Transverse colon (tissue), 4 donors: ENCODE measurements at regions of chr6 and their contacts with region 1.

Region 1: GRCh38 chr6:41633056-41633634 is 5.1 kb upstream of the MDFI start:
- DNase-seq: no peak
- H3K4me3 ChIP-seq: no peak overlapping the region
- H3K27ac ChIP-seq: no peak overlapping the region
- H3K4me1 ChIP-seq: peaks cover 0 to 17% (median 12%) of the 10 kb centered on the region in 4 donors
- H3K27me3 ChIP-seq: peaks cover 33% of the 10 kb centered on the region
- CTCF ChIP-seq: no peak
- EP300 ChIP-seq: no peak
- POLR2A ChIP-seq: no peak

Region 2: DNA sequence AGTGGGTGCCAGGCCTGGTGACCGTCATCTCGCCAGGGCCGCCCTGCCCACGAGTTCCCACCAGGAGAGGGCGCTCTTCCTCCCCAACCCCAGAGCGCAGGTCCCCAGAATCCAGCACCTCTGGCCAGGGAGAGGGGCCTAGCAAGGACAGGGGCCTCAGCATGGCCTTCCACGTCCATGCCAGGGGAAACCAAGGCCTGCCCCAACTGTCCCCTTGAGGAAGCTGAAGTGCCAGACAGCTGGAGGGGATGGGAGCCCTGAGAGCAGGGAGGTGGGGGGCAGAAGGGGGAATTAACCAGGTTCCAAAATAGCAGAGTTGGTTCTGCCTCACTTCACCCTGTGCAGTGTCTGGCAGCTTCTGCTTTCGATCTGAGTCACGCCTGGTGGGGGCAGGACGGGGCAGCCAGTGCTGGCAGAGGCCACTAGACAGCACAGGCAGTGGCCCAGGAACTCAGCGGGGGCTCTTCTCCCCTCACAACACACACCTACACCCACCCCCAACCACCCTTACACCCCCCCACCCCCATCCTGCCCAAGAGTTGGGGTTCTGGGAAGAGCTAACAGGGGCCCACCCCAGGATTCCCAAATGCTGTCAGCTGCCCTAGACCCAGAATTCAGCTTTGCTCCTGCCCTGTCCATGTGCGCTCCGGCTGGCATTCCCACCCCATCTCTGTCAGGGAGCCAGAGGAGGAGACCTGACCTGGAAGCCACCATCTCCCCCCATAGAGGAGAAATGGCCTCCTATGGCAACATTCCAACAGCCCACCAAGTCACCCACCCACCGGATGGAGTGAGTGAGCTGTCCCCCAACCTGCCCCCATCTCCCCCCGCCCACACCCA is 73.1 kb after region 1 on chr6:
- in situ Hi-C with region 1: no loop called
- intact Hi-C with region 1: loop called (anchors 2 kb)
- DNase-seq: peak; percentile 84
- H3K4me3 ChIP-seq: no peak overlapping the region
- H3K27ac ChIP-seq: peak overlapping the region; percentile 66 to 87 (median 78)
- H3K4me1 ChIP-seq: peaks cover 27 to 46% (median 32%) of the 10 kb centered on the region in 4 donors
- H3K27me3 ChIP-seq: no peaks in the 10 kb centered on the region
- CTCF ChIP-seq: peak; percentile 79 to 92 (median 84)
- EP300 ChIP-seq: no peak
- POLR2A ChIP-seq: no peak